ENCODE measurements at regions of chr15 and their contacts with region 1.

Region 1: GRCh38 chr15:84023636-84024035 is 211.9 kb upstream of the GOLGA6L4 start:
- DNase-seq: peak; percentile 32
- H3K4me3 ChIP-seq: no peak overlapping the region
- H3K27ac ChIP-seq: no peak overlapping the region
- H3K4me1 ChIP-seq: no peaks in the 10 kb centered on the region
- H3K27me3 ChIP-seq: no peaks in the 10 kb centered on the region
- CTCF ChIP-seq: peak; percentile 63 to 76

Region 2: DNA sequence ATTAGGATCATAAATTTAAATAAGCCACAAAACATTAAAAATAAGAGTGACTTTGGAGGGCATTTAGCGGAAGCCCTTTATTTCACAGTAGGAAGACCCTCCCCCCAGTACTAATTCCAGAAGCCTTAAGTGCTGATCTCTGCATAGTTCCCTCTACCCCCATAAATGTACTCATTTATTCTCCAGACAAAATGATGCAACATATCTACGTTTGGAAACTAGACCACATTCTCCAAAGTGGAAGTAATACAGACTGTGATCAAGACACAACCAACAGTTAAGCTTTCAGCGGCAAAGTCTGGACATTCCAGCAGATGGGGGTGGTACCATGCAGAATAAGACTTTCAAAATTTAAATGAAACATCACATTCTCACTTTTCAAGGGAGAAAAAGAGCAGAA is 1438.6 kb before region 1 on chr15:
- CTCF ChIA-PET with region 1: no interaction called
- dilution Hi-C with region 1: loop called (anchors 25 kb)
- in situ Hi-C with region 1: no loop called
- intact Hi-C with region 1: no loop called
- DNase-seq: peak; percentile 19
- H3K4me3 ChIP-seq: no peak overlapping the region
- H3K27ac ChIP-seq: no peak overlapping the region
- H3K4me1 ChIP-seq: no peaks in the 10 kb centered on the region
- H3K27me3 ChIP-seq: no peaks in the 10 kb centered on the region
- CTCF ChIP-seq: peak in 1 of 2 donors; percentile 24

Region 3: DNA sequence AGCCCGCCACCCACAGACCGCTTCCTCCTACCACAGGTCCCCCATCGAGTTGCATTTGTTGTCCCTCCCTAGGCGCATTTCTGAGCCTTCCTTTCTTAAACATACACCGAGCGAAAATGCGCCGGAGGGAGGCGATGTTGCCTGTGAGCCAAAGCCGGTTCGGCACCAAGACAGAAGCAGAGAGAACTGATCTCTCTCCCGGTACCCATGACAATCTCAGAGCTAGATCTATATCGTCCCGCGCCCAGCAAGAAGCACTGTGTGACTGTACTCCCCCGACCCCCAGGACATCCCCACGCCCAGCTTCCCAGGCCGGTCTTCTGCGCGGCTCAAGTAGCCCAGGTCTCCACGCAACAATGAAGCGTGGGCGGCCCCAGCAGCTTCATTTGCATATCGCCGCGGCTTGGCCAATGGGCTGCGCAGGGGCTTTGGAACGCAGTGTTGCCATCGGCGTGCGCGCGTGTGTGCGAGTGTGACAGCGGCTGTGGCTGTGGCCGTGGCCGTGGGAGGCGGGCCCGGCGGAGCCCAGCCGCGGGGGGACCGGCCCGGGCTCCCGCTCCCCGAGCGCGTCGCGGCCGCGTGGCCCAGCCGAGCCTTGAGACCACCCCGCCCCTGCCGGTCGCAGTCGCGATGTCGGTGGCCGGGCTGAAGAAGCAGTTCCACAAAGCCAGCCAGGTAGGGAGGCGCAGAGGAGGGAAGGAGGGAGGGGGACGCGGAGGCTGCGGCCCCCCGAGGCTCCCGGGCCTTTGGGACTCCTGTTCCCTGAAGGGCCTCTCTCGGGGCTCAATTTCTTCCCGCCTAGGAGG is 576.5 kb before region 1 on chr15 and contains the start of gene SH3GL3:
- CTCF ChIA-PET with region 1: no interaction called
- dilution Hi-C with region 1: no loop called
- in situ Hi-C with region 1: loop called (anchors 25 kb)
- intact Hi-C with region 1: loop called (anchors 5 kb)
- DNase-seq: peak; percentile 79
- H3K4me3 ChIP-seq: peak within 1 kb of the TSS; percentile 58 to 65 (median 63)
- H3K27ac ChIP-seq: no peak within 1 kb of the TSS
- H3K4me1 ChIP-seq: peaks cover 9% of the 10 kb centered on the region
- H3K27me3 ChIP-seq: no peaks in the 10 kb centered on the region
- CTCF ChIP-seq: peak; percentile 24 to 62
- total RNA-seq, gene SH3GL3: 0.40 TPM in 1 of 2 donors, not detected in the other

Region 4: GRCh38 chr15:83837945-83838571 is 185.6 kb before region 1 on chr15:
- CTCF ChIA-PET with region 1: interaction called, 3 read pairs
- dilution Hi-C with region 1: no loop called
- in situ Hi-C with region 1: no loop called
- intact Hi-C with region 1: loop called (anchors 2 kb)
- DNase-seq: peak; percentile 26
- H3K4me3 ChIP-seq: no peak overlapping the region
- H3K27ac ChIP-seq: no peak overlapping the region
- H3K4me1 ChIP-seq: no peaks in the 10 kb centered on the region
- H3K27me3 ChIP-seq: no peaks in the 10 kb centered on the region
- CTCF ChIP-seq: peak; percentile 71 to 80

Region 5: GRCh38 chr15:84099181-84099580 is 75.5 kb after region 1 on chr15:
- CTCF ChIA-PET with region 1: no interaction called
- dilution Hi-C with region 1: no loop called
- in situ Hi-C with region 1: no loop called
- intact Hi-C with region 1: no loop called
- DNase-seq: peak; percentile 38
- H3K4me3 ChIP-seq: no peak overlapping the region
- H3K27ac ChIP-seq: no peak overlapping the region
- H3K4me1 ChIP-seq: no peaks in the 10 kb centered on the region
- H3K27me3 ChIP-seq: no peaks in the 10 kb centered on the region
- CTCF ChIP-seq: no peak